HepG2 (cell line): ENCODE measurements at regions of chr13 and their contacts with region 1.

Region 1: DNA sequence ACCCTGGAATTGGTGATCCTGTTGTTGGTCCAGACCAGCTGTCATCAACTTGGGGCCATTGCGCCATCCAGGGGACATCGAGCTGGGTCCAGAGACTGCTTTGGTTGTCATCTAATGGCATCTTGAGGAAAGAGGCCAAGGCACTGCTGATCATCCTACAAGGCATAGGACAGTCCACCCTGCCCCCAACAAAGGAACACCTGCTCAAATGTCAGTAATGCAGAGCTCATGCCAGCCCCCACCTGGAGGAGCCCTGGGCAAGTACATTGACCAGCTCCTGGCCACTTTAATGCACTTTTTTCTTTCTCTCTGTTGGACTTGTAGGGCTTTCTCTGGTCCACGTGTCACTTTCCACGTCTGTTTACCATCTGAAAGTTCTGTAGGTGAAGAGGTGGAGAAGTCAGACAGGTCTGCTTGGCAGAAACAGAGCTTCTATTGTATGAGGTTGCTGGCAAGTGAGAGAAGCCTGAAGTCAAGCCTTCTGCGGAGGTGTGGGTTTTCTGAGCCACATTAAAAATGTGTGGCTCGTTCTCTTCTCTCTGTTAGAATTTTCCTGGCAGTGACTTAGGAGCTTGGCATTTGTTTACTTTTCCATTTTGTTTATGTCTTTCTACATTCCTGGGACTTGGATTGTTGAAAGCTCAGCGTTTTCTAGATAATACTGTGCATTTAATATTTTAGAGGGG is 124.0 kb upstream of the RNF113B start:
- DNase-seq: peak; percentile 96
- ATAC-seq: peak; percentile 90
- H3K4me3 ChIP-seq: peak overlapping the region in 1 of 3 experiments; percentile 30; a peak in 1 of 6 replicates
- H3K27ac ChIP-seq: peak overlapping the region; percentile 80
- H3K4me1 ChIP-seq: peaks cover 97% of the 10 kb centered on the region
- H3K27me3 ChIP-seq: no peaks in the 10 kb centered on the region
- CTCF ChIP-seq: peak; percentile 66
- EP300 ChIP-seq: peak in 1 of 2 experiments; percentile 52; a peak in 2 of 4 replicates
- POLR2A ChIP-seq: no peak
- RAD21 ChIP-seq: no peak

Region 2: DNA sequence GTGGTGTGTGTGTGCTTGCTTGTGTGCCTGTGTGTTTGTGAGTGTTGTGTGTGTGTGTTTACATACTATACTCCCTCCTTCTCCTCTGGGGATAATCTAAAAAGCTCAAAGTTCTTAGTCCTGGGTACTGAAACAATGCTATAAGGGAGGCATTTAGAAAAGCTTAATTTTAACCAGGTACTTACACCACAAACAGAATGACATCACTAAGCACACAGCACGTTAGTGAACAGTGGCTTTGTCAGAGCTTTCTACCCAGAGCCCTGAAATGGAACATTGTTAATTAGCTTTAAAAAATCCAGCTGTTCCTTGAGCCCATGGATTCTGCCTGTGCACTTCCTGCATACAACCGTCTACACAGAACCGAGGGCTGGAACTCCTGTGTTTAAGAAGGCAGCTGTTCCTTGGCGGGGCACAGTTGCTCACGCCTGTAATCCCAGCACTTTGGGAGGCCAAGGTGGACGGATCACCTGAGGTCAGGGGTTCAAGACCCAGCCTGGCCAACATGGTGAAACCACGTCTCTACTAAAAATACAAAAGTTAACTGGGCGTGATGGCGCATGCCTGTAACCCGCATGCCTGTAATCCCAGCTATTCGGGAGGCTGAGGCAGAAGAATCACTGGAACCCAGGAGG is 54.4 kb before region 1 on chr13:
- CTCF ChIA-PET with region 1: no interaction called
- POLR2A ChIA-PET with region 1: interaction called, 6 read pairs
- in situ Hi-C with region 1: no loop called
- intact Hi-C with region 1: loop called (anchors 2 kb)
- DNase-seq: peak; percentile 96
- ATAC-seq: peak; percentile 92
- H3K4me3 ChIP-seq: no peak overlapping the region; a peak in 1 of 6 replicates
- H3K27ac ChIP-seq: peak overlapping the region; percentile 87
- H3K4me1 ChIP-seq: peaks cover 100% of the 10 kb centered on the region
- H3K27me3 ChIP-seq: no peaks in the 10 kb centered on the region
- CTCF ChIP-seq: no peak
- EP300 ChIP-seq: peak in 1 of 2 experiments; percentile 82; a peak in 2 of 4 replicates
- POLR2A ChIP-seq: no peak
- RAD21 ChIP-seq: no peak

Region 3: GRCh38 chr13:98273824-98274742 is 27.0 kb before region 1 on chr13:
- CTCF ChIA-PET with region 1: no interaction called
- POLR2A ChIA-PET with region 1: interaction called, 21 read pairs
- in situ Hi-C with region 1: no loop called
- intact Hi-C with region 1: no loop called
- DNase-seq: no peak
- ATAC-seq: peak; percentile 38
- H3K4me3 ChIP-seq: peak overlapping the region in 2 of 3 experiments; percentile 39 to 50; a peak in 4 of 6 replicates
- H3K27ac ChIP-seq: peak overlapping the region; percentile 75
- H3K4me1 ChIP-seq: peaks cover 94% of the 10 kb centered on the region
- H3K27me3 ChIP-seq: no peaks in the 10 kb centered on the region
- CTCF ChIP-seq: no peak
- EP300 ChIP-seq: no peak; a peak in 1 of 4 replicates
- POLR2A ChIP-seq: no peak
- RAD21 ChIP-seq: no peak

Region 4: GRCh38 chr13:98706446-98707110 is 405.5 kb after region 1 on chr13:
- CTCF ChIA-PET with region 1: no interaction called
- POLR2A ChIA-PET with region 1: no interaction called
- in situ Hi-C with region 1: no loop called
- intact Hi-C with region 1: no loop called
- DNase-seq: peak; percentile 7
- ATAC-seq: no peak
- H3K4me3 ChIP-seq: no peak overlapping the region
- H3K27ac ChIP-seq: no peak overlapping the region
- H3K4me1 ChIP-seq: no peaks in the 10 kb centered on the region
- H3K27me3 ChIP-seq: no peaks in the 10 kb centered on the region; a peak in 2 of 5 replicates
- CTCF ChIP-seq: no peak
- EP300 ChIP-seq: no peak
- POLR2A ChIP-seq: no peak
- RAD21 ChIP-seq: no peak

Region 5: DNA sequence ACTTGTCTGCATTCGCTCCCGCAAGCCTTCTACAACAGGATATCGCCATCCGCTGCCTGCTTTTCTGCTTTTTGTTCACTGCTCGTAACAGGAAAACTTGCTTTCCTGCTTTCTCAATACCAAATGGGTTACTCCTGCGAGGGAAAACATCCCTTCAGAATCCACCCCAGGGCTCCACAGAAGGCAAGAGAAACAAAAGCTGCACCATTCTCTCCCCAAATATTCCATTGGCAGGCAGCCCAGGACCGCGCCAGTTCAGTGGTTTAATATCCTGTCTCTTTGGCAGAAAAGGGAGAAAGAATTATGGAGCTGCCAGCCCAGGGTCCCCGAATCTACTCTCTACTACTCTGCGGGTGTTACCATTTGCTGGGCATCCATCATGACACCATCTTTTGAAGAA is 761.5 kb after region 1 on chr13:
- CTCF ChIA-PET with region 1: no interaction called
- POLR2A ChIA-PET with region 1: no interaction called
- in situ Hi-C with region 1: no loop called
- intact Hi-C with region 1: no loop called
- DNase-seq: no peak
- ATAC-seq: no peak
- H3K4me3 ChIP-seq: no peak overlapping the region
- H3K27ac ChIP-seq: no peak overlapping the region
- H3K4me1 ChIP-seq: no peaks in the 10 kb centered on the region
- H3K27me3 ChIP-seq: no peaks in the 10 kb centered on the region
- CTCF ChIP-seq: no peak
- EP300 ChIP-seq: no peak
- POLR2A ChIP-seq: no peak
- RAD21 ChIP-seq: no peak